ENCODE measurements at regions of chr4 and their contacts with region 1.

Region 1: GRCh38 chr4:139099366-139099982 is 77.5 kb downstream of the ELF2 start:
- DNase-seq: peak; percentile 60
- ATAC-seq: peak; percentile 67 to 84

Region 2: GRCh38 chr4:139177868-139178611 is 78.6 kb after region 1 on chr4:
- intact Hi-C with region 1: loop called in 1 of 2 experiments (anchors 5 kb)
- DNase-seq: peak; percentile 97
- ATAC-seq: peak; percentile 89 to 90

Region 3: DNA sequence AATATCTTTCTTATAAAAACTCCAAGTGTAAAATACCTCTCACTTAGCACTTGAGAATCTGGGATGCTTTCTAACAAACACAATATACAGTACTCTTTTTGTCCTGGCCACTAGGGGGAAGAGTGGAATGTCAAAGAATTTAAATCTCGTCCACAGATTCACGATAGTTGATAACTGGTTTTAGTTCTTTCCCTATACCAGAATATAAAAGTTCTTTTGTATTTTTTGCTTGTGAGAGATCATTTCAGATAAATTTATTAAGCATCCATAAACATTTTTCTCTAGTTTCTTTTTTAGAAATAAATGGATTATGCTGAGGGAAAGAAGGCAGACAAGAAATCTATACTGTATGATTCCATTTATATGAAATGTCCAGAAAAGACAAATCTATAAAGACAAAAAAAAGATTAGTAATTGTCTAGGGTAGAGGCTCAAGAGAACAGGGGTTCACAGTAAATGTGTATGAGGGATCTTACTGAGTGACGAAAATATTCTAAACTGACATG is 130.1 kb after region 1 on chr4:
- intact Hi-C with region 1: loop called in 1 of 2 experiments (anchors 5 kb)
- DNase-seq: no peak
- ATAC-seq: peak; percentile 68 to 69